ENCODE measurements at regions of chr4 and their contacts with region 1.

Region 1: GRCh38 chr4:82428969-82429727 is 1.1 kb downstream of the HNRNPDL start:
- DNase-seq: peak; percentile 68 to 97 (median 93)

Region 2: DNA sequence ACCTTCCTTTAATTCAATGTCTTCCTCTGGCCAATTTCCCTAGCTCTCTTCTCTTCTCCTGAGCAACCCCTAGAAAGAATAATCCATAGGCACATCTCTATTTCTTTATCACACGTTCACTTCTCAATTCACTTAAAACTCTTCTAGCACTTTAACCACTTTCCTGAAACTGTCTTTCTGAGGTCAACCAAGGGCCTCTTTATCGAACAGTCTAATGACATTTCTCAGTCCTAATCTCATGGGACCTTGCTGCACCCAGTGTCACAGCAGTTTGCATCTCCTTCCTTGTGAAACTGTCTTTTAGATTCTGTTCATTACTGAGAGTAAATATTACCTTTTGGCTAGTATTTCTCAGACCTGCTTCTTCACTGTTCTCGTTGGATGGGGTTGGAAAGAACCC is 672.2 kb before region 1 on chr4:
- intact Hi-C with region 1: no loop called
- DNase-seq: no peak

Region 3: GRCh38 chr4:82284858-82285805 is 144.0 kb before region 1 on chr4:
- intact Hi-C with region 1: loop called (anchors 5 kb)
- DNase-seq: peak; percentile 98 to 100 (median 99)

Region 4: GRCh38 chr4:82373816-82374625 is 55.1 kb before region 1 on chr4 and contains the start of gene HNRNPD:
- intact Hi-C with region 1: loop called (anchors 1 kb)
- DNase-seq: peak; percentile 90 to 99 (median 96)

Region 5: DNA sequence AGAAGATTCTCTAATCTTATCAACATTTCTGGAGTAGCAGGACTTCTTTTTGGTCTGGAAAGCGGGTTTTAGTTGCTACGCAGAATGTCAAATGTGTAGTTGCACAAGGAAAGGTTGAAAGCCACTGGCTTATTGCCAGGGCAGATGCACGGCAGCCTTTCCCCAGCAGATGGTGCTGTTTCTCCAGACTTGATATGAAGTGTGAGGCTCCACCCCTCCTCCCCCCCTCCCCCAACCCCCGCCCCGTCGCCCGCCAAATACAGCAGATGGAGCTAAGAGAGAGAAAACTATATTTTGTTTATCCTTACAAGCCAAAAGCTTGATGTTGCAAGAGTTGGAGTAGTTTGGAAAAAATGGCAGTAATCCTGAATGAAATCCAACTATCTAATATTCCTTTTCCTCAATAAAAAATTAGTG is 33.3 kb after region 1 on chr4:
- intact Hi-C with region 1: no loop called
- DNase-seq: peak; percentile 69 to 97 (median 90)

Region 6: GRCh38 chr4:82585690-82586435 is 156.7 kb after region 1 on chr4:
- intact Hi-C with region 1: no loop called
- DNase-seq: peak in 7 of 42 donors; percentile 6 to 27 (median 16)

Region 7: GRCh38 chr4:83012687-83013419 is 583.7 kb after region 1 on chr4:
- intact Hi-C with region 1: loop called (anchors 5 kb)
- DNase-seq: peak; percentile 92 to 99 (median 98)

Measured in head of caudate nucleus (tissue), 42 donors.